ENCODE measurements at regions of chr7 and their contacts with region 1.

Region 1: GRCh38 chr7:90211391-90212148 is at the start of gene STEAP2:
- DNase-seq: peak; percentile 86 to 90
- H3K4me3 ChIP-seq: peak within 1 kb of the TSS; percentile 80 to 98 (median 88)
- H3K27ac ChIP-seq: peak within 1 kb of the TSS; percentile 44; the same call in 1 of the 2 replicates
- H3K4me1 ChIP-seq: peaks cover 5 to 18% (median 12%) of the 10 kb centered on the region in 4 experiments; a peak in 6 of 7 replicates
- H3K27me3 ChIP-seq: no peaks in the 10 kb centered on the region
- CTCF ChIP-seq: peak; percentile 56 to 73 (median 65)
- EP300 ChIP-seq: peak; percentile 22 to 61; a peak in 1 of 3 replicates
- POLR2A ChIP-seq: peak in 1 of 2 experiments; percentile 63; a peak in 1 of 3 replicates
- RAD21 ChIP-seq: peak; percentile 40 to 51; a peak in 3 of 4 replicates
- total RNA-seq, gene STEAP2: 17.4 and 18.4 TPM in 2 replicates

Region 2: GRCh38 chr7:90155206-90155605 is 56.4 kb before region 1 on chr7:
- CTCF ChIA-PET with region 1: interaction called, 11 read pairs
- POLR2A ChIA-PET with region 1: no interaction called
- DNase-seq: no peak
- H3K4me3 ChIP-seq: no peak overlapping the region
- H3K27ac ChIP-seq: no peak overlapping the region
- H3K4me1 ChIP-seq: no peaks in the 10 kb centered on the region
- H3K27me3 ChIP-seq: no peaks in the 10 kb centered on the region
- CTCF ChIP-seq: no peak
- EP300 ChIP-seq: no peak
- POLR2A ChIP-seq: no peak
- RAD21 ChIP-seq: no peak

Region 3: GRCh38 chr7:90165724-90166123 is 45.8 kb before region 1 on chr7:
- CTCF ChIA-PET with region 1: no interaction called
- POLR2A ChIA-PET with region 1: no interaction called
- DNase-seq: no peak
- H3K4me3 ChIP-seq: no peak overlapping the region
- H3K27ac ChIP-seq: no peak overlapping the region
- H3K4me1 ChIP-seq: no peaks in the 10 kb centered on the region
- H3K27me3 ChIP-seq: no peaks in the 10 kb centered on the region
- CTCF ChIP-seq: no peak
- EP300 ChIP-seq: no peak
- POLR2A ChIP-seq: no peak
- RAD21 ChIP-seq: peak in 1 of 2 experiments; percentile 11; a peak in 2 of 4 replicates

Region 4: GRCh38 chr7:90222811-90223725 is 11.5 kb after region 1 on chr7:
- CTCF ChIA-PET with region 1: interaction called, 13 read pairs
- POLR2A ChIA-PET with region 1: interaction called, 48 read pairs
- DNase-seq: no peak
- H3K4me3 ChIP-seq: no peak overlapping the region
- H3K27ac ChIP-seq: no peak overlapping the region
- H3K4me1 ChIP-seq: peaks cover 0 to 18% (median 6%) of the 10 kb centered on the region in 4 experiments; a peak in 5 of 7 replicates
- H3K27me3 ChIP-seq: no peaks in the 10 kb centered on the region
- CTCF ChIP-seq: no peak
- EP300 ChIP-seq: no peak
- POLR2A ChIP-seq: no peak
- RAD21 ChIP-seq: no peak

Region 5: DNA sequence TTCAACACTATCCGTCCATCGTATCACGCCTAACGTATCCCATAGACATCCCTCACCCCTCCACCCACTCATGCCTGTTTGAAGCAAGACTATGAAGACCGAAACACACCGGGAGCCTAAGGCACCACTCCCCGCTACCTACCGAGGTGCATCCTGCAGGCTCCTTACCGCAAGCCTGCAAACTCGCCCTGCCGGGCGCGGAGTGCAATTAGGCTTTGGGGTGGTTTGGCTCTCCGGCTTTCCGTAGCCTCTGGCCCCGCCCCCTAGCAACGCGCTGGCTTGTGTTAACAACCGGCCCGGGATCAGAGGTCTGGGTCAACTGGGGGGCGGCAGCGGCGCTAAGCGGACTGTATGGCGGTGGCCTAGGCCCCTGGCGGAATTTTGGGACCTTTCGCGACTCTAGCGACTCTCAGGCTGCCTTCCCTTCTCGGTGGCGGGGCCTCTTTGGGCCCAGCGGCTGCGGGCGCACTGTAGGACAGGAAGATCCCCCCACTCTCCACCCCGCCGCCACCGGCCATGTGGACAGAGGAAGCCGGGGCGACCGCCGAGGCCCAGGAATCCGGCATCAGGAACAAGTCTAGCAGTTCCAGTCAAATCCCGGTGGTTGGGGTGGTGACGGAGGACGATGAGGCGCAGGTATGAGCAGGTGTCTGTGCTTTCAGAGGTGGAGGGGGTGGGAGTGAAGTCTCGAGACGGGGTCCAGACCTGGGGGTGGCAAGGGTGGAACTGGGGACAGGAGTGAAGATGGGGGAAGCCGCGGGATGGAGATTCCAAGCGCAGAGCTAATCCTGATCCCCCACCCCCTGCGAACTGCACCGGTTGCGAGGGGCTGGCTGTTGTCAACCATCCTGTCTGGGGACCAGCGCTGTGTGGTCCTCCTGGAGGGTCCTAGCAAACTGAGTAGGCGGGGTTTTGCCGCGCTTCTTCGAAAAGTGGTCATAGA is 33.6 kb after region 1 on chr7 and contains the start of gene CFAP69:
- CTCF ChIA-PET with region 1: interaction called, 13 read pairs
- POLR2A ChIA-PET with region 1: interaction called, 3 read pairs
- DNase-seq: peak; percentile 85 to 100
- H3K4me3 ChIP-seq: peak within 1 kb of the TSS; percentile 67 to 85 (median 84)
- H3K27ac ChIP-seq: no peak within 1 kb of the TSS
- H3K4me1 ChIP-seq: peaks cover 0 to 6% (median 3%) of the 10 kb centered on the region in 4 experiments; a peak in 5 of 7 replicates
- H3K27me3 ChIP-seq: peaks cover 0 to 6% (median 2%) of the 10 kb centered on the region in 4 experiments; a peak in 3 of 7 replicates
- CTCF ChIP-seq: peak; percentile 25 to 38 (median 25)
- EP300 ChIP-seq: no peak; a peak in 1 of 3 replicates
- POLR2A ChIP-seq: no peak
- RAD21 ChIP-seq: peak in 1 of 2 experiments; percentile 22; a peak in 1 of 4 replicates
- total RNA-seq, gene CFAP69: 3.2 and 3.8 TPM in 2 replicates

Region 6: DNA sequence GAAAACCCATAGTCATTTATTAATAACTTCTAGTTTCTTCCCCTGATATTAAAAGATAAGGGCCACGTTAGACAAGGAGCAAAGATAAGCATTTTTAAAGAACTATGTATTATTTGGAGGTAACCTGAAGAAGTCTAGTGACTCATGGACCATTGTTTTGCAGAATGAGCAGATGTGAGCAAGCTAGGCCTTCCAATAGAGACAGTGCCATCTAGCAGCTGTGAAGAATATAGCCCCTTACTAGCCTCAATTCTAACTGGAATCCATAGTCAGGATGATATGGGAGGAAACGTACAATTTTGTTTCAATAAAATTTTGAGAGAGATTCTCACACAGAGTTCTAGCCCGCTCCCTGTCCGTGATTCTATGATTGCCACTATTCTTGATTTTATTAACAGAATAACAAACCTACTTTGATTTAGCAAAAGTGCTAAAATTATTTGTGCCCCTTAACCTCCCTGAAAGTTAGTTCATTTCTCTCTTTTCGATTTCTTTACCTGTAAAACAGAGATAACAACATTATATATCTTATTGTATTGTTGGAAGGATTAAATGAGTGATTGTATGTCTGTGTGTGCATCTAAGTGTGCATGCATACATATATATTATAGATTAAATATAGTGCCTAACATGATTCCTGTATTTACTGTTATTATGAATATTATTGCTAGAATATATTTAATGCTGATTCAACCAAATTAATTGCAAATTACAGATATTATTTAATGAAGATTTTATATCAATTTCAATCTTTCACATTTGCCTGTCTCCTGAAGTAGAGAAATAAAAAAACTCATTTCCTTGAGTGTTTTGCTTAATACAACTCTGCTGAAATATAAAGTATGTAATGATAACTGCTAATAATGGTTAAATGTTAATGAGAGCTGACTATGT is 86.8 kb after region 1 on chr7:
- CTCF ChIA-PET with region 1: interaction called, 10 read pairs
- POLR2A ChIA-PET with region 1: no interaction called
- DNase-seq: no peak
- H3K4me3 ChIP-seq: no peak overlapping the region
- H3K27ac ChIP-seq: no peak overlapping the region
- H3K4me1 ChIP-seq: no peaks in the 10 kb centered on the region
- H3K27me3 ChIP-seq: no peaks in the 10 kb centered on the region
- CTCF ChIP-seq: peak in 2 of 3 experiments; percentile 57 to 75; a peak in 3 of 4 replicates
- EP300 ChIP-seq: no peak
- POLR2A ChIP-seq: no peak
- RAD21 ChIP-seq: peak; percentile 65 to 75